Endothelial cell of umbilical vein (primary cell): ENCODE measurements at regions of chr20 and their contacts with region 1.

Region 1: DNA sequence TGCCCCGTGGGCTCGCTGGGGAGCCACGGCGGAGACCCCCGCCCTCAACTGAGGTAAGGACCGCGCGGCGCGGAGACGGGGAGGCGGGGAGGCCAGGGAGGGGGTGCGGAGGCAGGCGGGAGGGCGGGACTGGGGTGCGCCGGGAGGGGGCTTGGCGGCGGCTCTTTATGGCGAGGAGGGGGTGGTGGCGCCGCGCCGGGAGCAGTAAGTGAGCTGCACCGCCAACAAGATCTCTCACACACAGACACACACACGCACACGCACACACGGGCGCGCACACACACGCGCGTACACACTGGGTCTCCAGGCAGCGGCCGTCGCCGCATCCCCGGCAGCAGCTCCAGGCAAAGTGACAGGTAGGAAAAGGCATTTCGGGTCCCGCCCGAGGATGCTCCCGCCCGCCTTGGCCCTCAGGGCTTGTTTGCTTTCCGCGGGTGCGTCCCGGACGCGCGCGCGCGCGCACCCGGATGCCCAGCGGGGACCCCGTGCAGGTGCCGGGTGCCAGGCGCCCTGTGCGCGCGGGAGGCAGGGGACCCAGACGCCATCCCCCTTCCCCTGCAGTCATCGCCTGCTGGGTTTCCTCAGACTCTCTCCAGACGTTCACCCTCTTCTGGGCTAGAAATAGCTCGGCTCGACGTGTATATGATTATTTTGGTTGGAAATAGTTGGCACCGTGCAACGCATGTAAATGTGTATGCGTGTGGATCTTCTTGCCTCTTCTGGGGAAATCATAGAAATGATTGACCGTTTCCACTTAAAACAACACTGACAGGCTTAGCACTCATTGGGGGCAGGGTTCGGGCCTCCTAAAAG is at the start of gene PLCB4:
- DNase-seq: peak; percentile 46
- H3K4me3 ChIP-seq: peak within 1 kb of the TSS; percentile 42 to 81 (median 69)
- H3K27ac ChIP-seq: no peak within 1 kb of the TSS
- H3K4me1 ChIP-seq: no peaks in the 10 kb centered on the region
- H3K27me3 ChIP-seq: peaks cover 0 to 5% of the 10 kb centered on the region in 2 experiments
- CTCF ChIP-seq: no peak
- POLR2A ChIP-seq: no peak
- total RNA-seq, gene PLCB4: 1.6 and 1.7 TPM in 2 replicates

Region 2: DNA sequence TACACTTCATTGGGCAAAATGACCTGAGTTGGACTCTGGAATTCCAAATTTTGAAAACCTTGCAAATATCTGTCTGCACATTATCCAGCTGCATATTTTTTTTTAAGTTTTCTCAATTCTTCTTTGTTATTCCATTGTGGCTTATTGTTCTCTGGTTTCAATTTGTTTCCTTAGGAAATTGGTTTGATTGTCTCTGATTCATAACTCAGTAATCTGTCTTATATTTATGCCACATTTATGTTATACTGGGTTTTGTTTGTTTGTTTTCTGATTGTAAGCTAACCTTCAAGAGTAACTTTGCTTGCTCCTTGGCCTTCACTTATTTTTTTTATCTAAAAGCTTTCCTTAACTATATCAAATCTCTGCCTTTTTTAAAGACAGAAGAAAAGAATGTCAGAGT is 193.5 kb before region 1 on chr20:
- CTCF ChIA-PET with region 1: no interaction called
- POLR2A ChIA-PET with region 1: no interaction called
- dilution Hi-C with region 1: no loop called
- intact Hi-C with region 1: loop called (anchors 5 kb)
- DNase-seq: peak; percentile 64
- H3K4me3 ChIP-seq: no peak overlapping the region
- H3K27ac ChIP-seq: peak overlapping the region; percentile 34
- H3K4me1 ChIP-seq: peaks cover 13% of the 10 kb centered on the region
- H3K27me3 ChIP-seq: no peaks in the 10 kb centered on the region
- CTCF ChIP-seq: no peak
- POLR2A ChIP-seq: no peak